ENCODE measurements at regions of chrX and their contacts with region 1.

Region 1: DNA sequence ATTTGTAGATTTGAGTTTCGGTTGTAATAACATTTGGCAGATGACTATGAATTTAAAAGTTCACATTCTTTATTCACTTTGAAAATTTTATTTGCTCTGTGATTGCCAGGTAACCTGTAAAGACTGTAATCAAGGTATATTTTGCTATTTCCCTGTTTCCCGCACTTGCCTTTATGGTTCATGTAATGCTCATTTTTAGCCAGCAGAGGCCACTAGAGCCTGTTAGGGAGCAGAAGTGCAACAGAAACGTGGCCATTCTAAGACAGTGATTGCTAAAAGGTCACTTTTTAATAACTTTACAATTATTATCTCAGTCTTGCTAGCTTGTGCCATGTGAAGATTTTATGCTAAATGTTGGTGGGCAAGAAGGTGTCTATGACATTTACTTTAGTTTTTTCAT is 12.4 kb downstream of the YIPF6 start:
- DNase-seq: no peak
- H3K4me3 ChIP-seq: no peak overlapping the region
- H3K27ac ChIP-seq: no peak overlapping the region
- H3K4me1 ChIP-seq: no peaks in the 10 kb centered on the region
- H3K27me3 ChIP-seq: no peaks in the 10 kb centered on the region
- CTCF ChIP-seq: peak; percentile 32 to 57 (median 48)
- EP300 ChIP-seq: no peak
- POLR2A ChIP-seq: no peak

Region 2: DNA sequence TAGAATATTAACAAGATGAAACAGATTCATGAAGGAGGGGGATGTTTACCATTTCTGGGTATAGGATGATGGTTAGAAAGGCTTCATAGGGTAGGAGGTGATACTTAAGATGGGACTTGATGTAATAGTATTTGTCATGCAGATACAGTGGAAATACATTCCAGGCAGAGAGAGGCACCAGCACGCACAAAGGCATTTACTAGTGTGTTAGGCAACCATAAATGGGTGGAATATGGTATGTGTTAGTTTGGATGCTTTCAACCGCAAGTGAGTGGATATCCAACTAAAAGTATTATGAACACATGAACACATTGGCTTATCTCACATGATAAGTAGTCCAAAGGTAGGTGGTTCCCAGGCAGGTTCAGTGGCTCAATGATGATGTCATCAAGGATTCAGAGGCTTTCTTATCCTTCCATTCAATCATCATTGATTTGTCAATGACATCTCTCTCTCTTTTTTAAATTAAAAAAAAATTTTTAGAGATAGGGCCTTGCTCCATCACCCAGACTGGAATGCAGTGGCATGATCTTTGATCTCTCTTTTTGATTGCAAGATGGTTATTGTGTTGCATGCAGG is 123.5 kb after region 1 on chrX:
- intact Hi-C with region 1: no loop called
- DNase-seq: no peak
- H3K4me3 ChIP-seq: no peak overlapping the region
- H3K27ac ChIP-seq: no peak overlapping the region
- H3K4me1 ChIP-seq: no peaks in the 10 kb centered on the region
- H3K27me3 ChIP-seq: no peaks in the 10 kb centered on the region
- CTCF ChIP-seq: no peak
- EP300 ChIP-seq: no peak
- POLR2A ChIP-seq: no peak

Region 3: GRCh38 chrX:68807818-68808217 is 296.6 kb after region 1 on chrX:
- intact Hi-C with region 1: loop called (anchors 10 kb)
- DNase-seq: no peak
- H3K4me3 ChIP-seq: no peak overlapping the region
- H3K27ac ChIP-seq: no peak overlapping the region
- H3K4me1 ChIP-seq: no peaks in the 10 kb centered on the region
- H3K27me3 ChIP-seq: no peaks in the 10 kb centered on the region
- CTCF ChIP-seq: peak in 1 of 4 experiments; percentile 25
- EP300 ChIP-seq: no peak
- POLR2A ChIP-seq: no peak

Region 4: GRCh38 chrX:69387567-69388487 is 876.6 kb after region 1 on chrX:
- intact Hi-C with region 1: loop called (anchors 5 kb)
- DNase-seq: no peak
- H3K4me3 ChIP-seq: no peak overlapping the region
- H3K27ac ChIP-seq: no peak overlapping the region
- H3K4me1 ChIP-seq: no peaks in the 10 kb centered on the region
- H3K27me3 ChIP-seq: peaks cover 0 to 3% (median 0%) of the 10 kb centered on the region in 3 donors
- CTCF ChIP-seq: peak; percentile 32 to 57 (median 52)
- EP300 ChIP-seq: no peak
- POLR2A ChIP-seq: no peak

Measured in sigmoid colon (tissue), 7 donors.